Body of pancreas (tissue), 4 donors: ENCODE measurements at regions of chr14 and their contacts with region 1.

Region 1: GRCh38 chr14:21369949-21370679 is 13.7 kb downstream of the SUPT16H start:
- DNase-seq: no peak
- ATAC-seq: no peak
- H3K4me3 ChIP-seq: no peak overlapping the region
- H3K27ac ChIP-seq: no peak overlapping the region
- H3K4me1 ChIP-seq: no peaks in the 10 kb centered on the region
- H3K27me3 ChIP-seq: no peaks in the 10 kb centered on the region
- CTCF ChIP-seq: no peak
- POLR2A ChIP-seq: no peak

Region 2: GRCh38 chr14:21121106-21121505 is 249.0 kb before region 1 on chr14:
- intact Hi-C with region 1: no loop called
- DNase-seq: no peak
- ATAC-seq: no peak
- H3K4me3 ChIP-seq: no peak overlapping the region
- H3K27ac ChIP-seq: no peak overlapping the region
- H3K4me1 ChIP-seq: no peaks in the 10 kb centered on the region
- H3K27me3 ChIP-seq: no peaks in the 10 kb centered on the region
- CTCF ChIP-seq: no peak
- POLR2A ChIP-seq: no peak

Region 3: GRCh38 chr14:21233457-21234076 is 136.5 kb before region 1 on chr14:
- intact Hi-C with region 1: loop called (anchors 10 kb)
- DNase-seq: no peak
- ATAC-seq: no peak
- H3K4me3 ChIP-seq: no peak overlapping the region
- H3K27ac ChIP-seq: no peak overlapping the region
- H3K4me1 ChIP-seq: peaks cover 68% of the 10 kb centered on the region
- H3K27me3 ChIP-seq: no peaks in the 10 kb centered on the region
- CTCF ChIP-seq: peak in 4 of 7 experiments; percentile 15 to 33 (median 18)
- POLR2A ChIP-seq: no peak

Region 4: DNA sequence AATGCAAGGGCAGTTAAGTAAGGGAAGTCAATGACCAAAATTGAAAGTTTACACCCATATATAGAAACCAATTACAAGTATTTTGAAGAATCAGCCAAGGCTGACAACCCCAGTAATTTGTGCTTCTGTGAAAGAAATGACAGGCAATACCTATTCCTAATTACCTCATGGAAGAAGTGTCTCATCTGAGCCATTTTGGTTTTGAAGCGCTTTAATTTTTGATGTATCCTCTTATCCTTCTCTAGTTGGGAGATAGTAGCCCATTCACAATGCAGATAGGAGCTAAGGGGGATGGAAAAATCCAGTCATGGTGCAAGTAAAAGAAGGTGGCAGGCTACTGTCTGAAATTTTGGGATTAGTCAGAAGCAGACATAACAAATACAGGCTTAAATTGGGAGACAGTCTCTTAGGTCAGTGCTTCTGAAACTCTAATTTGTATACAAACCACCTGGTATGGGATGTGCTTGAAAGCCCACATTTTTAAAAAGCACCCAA is 44.1 kb after region 1 on chr14:
- intact Hi-C with region 1: loop called (anchors 10 kb)
- DNase-seq: no peak
- ATAC-seq: no peak
- H3K4me3 ChIP-seq: no peak overlapping the region
- H3K27ac ChIP-seq: no peak overlapping the region
- H3K4me1 ChIP-seq: no peaks in the 10 kb centered on the region
- H3K27me3 ChIP-seq: no peaks in the 10 kb centered on the region
- CTCF ChIP-seq: no peak
- POLR2A ChIP-seq: no peak

Region 5: GRCh38 chr14:21455911-21456667 is 86.0 kb after region 1 on chr14 and contains the start of gene CHD8:
- intact Hi-C with region 1: no loop called
- DNase-seq: peak; percentile 100
- ATAC-seq: peak; percentile 100
- H3K4me3 ChIP-seq: peak within 1 kb of the TSS; percentile 35 to 54
- H3K27ac ChIP-seq: peak within 1 kb of the TSS; percentile 94 to 98 (median 96)
- H3K4me1 ChIP-seq: peaks cover 27% of the 10 kb centered on the region
- H3K27me3 ChIP-seq: no peaks in the 10 kb centered on the region
- CTCF ChIP-seq: peak; percentile 24 to 84 (median 74)
- POLR2A ChIP-seq: peak; percentile 62 to 89 (median 87)
- total RNA-seq, gene CHD8: 33.2 to 72.2 TPM